CD8-positive, alpha-beta T cell (primary cell): ENCODE measurements at regions of chrX and their contacts with region 1.

Region 1: DNA sequence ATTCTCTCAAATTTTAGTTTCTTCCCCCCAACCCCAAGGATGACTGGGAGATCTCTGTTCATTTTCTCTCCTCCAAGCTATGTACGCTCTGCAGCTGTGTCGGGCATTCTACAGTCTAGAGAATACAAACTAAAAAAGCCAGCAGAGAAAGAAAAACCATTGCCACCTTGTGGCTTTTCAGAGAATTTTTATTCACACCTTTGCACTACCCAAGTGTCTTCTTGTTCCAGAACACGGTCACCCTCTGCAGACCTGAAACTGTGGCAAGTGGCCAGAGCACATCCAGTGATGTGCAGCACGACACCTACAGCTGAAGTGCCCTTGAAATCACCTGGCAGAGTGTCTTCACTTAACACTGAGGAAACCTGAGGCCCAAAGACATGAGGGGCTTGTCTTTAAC is 68.6 kb downstream of the CHST7 start:
- DNase-seq: peak in 3 of 9 experiments; percentile 0 to 49 (median 36)
- ATAC-seq: peak; percentile 54
- H3K4me3 ChIP-seq: no peak overlapping the region
- H3K4me3 Mint-ChIP-seq: no peak overlapping the region
- H3K27ac ChIP-seq: no peak overlapping the region
- H3K27ac Mint-ChIP-seq: no peak overlapping the region
- H3K4me1 ChIP-seq: no peaks in the 10 kb centered on the region
- H3K4me1 Mint-ChIP-seq: peaks cover 4% of the 10 kb centered on the region
- H3K27me3 ChIP-seq: no peaks in the 10 kb centered on the region
- H3K27me3 Mint-ChIP-seq: no peaks in the 10 kb centered on the region
- CTCF ChIP-seq: no peak

Region 2: GRCh38 chrX:46408553-46409407 is 233.4 kb before region 1 on chrX:
- CTCF ChIA-PET with region 1: no interaction called
- POLR2A ChIA-PET with region 1: no interaction called
- intact Hi-C with region 1: loop called in 1 of 2 experiments (anchors 10 kb)
- DNase-seq: peak; percentile 28 to 70 (median 64)
- ATAC-seq: no peak
- H3K4me3 ChIP-seq: no peak overlapping the region
- H3K4me3 Mint-ChIP-seq: no peak overlapping the region
- H3K27ac ChIP-seq: no peak overlapping the region
- H3K27ac Mint-ChIP-seq: no peak overlapping the region
- H3K4me1 ChIP-seq: no peaks in the 10 kb centered on the region
- H3K4me1 Mint-ChIP-seq: no peaks in the 10 kb centered on the region
- H3K27me3 ChIP-seq: no peaks in the 10 kb centered on the region
- H3K27me3 Mint-ChIP-seq: no peaks in the 10 kb centered on the region
- CTCF ChIP-seq: peak; percentile 60

Region 3: DNA sequence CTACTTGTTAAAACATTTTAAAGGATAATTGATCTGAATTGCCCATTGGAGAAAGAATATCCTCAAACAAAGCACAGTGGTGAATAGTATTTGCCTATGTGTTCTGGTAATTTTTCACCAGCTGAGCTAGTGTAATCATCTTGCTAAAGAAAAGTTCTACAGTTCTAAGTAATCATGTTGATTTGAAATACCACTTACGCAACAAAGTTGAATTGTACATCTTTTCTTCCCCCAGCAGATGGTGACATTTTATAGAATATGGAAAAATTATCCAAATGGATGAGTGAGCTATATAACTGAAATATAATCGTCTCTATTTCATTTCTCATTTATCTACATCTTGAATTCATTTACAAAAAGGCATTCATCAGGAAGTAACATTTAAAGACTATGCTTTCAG is 87.2 kb before region 1 on chrX:
- CTCF ChIA-PET with region 1: interaction called, 4 read pairs
- POLR2A ChIA-PET with region 1: no interaction called
- intact Hi-C with region 1: loop called in 1 of 2 experiments (anchors 5 kb)
- DNase-seq: peak in 1 of 9 experiments; percentile 28
- ATAC-seq: no peak
- H3K4me3 ChIP-seq: no peak overlapping the region
- H3K4me3 Mint-ChIP-seq: no peak overlapping the region
- H3K27ac ChIP-seq: no peak overlapping the region
- H3K27ac Mint-ChIP-seq: no peak overlapping the region
- H3K4me1 ChIP-seq: no peaks in the 10 kb centered on the region
- H3K4me1 Mint-ChIP-seq: no peaks in the 10 kb centered on the region
- H3K27me3 ChIP-seq: no peaks in the 10 kb centered on the region
- H3K27me3 Mint-ChIP-seq: no peaks in the 10 kb centered on the region
- CTCF ChIP-seq: no peak

Region 4: GRCh38 chrX:46573331-46573891 is 68.7 kb before region 1 on chrX and contains the start of gene CHST7:
- CTCF ChIA-PET with region 1: interaction called, 4 read pairs
- POLR2A ChIA-PET with region 1: no interaction called
- intact Hi-C with region 1: loop called (anchors 1 to 5 kb)
- DNase-seq: peak; percentile 15 to 77 (median 54)
- ATAC-seq: peak; percentile 57
- H3K4me3 ChIP-seq: peak within 1 kb of the TSS; percentile 63 to 64
- H3K4me3 Mint-ChIP-seq: peak within 1 kb of the TSS; percentile 79
- H3K27ac ChIP-seq: peak within 1 kb of the TSS; percentile 45 to 77
- H3K27ac Mint-ChIP-seq: peak within 1 kb of the TSS; percentile 87
- H3K4me1 ChIP-seq: peaks cover 27% of the 10 kb centered on the region
- H3K4me1 Mint-ChIP-seq: peaks cover 34% of the 10 kb centered on the region
- H3K27me3 ChIP-seq: no peaks in the 10 kb centered on the region
- H3K27me3 Mint-ChIP-seq: peaks cover 3% of the 10 kb centered on the region
- CTCF ChIP-seq: no peak
- total RNA-seq, gene CHST7: 9.4 to 9.7 TPM

Region 5: GRCh38 chrX:47366028-47366722 is 724.0 kb after region 1 on chrX:
- CTCF ChIA-PET with region 1: no interaction called
- POLR2A ChIA-PET with region 1: no interaction called
- intact Hi-C with region 1: no loop called
- DNase-seq: peak; percentile 47 to 92 (median 70)
- ATAC-seq: peak; percentile 80
- H3K4me3 ChIP-seq: peak overlapping the region; percentile 56 to 60
- H3K4me3 Mint-ChIP-seq: peak overlapping the region; percentile 95
- H3K27ac ChIP-seq: peak overlapping the region; percentile 50 to 80
- H3K27ac Mint-ChIP-seq: peak overlapping the region; percentile 96
- H3K4me1 ChIP-seq: peaks cover 14% of the 10 kb centered on the region
- H3K4me1 Mint-ChIP-seq: peaks cover 25% of the 10 kb centered on the region
- H3K27me3 ChIP-seq: no peaks in the 10 kb centered on the region
- H3K27me3 Mint-ChIP-seq: no peaks in the 10 kb centered on the region
- CTCF ChIP-seq: no peak

Region 6: DNA sequence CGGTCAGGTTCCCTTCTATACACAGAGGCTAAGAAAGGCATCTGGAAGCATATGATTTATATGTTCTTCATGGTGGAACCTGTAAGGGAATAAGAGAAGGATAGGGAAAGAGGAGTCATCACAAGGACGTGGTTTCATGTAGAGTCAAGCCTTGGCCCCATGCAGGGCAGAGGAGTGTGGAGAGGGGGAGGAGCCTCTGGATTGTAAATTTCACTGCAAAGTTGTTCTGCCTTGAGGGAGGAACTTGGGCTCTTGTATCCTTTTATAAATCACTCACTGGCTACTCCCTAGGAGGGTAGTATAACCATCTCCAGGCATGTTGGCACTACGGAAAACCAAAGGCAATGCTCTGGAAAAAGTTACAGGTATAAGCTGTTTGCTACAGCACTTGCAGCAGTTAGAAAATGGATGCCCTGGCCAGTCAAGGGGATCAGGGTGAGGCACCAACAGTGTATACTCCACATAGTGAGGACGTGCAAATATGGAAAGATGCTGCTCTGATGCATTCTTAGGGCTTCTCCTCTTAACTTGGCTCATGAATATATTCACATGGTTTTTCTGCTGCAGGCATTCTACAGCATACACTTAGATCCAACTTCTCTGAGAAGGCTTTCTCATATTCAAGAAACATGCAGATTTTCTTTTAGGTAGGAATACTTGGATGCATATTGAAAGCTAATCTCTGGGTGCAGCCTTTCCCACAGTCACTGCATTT is 1134.3 kb after region 1 on chrX:
- CTCF ChIA-PET with region 1: no interaction called
- POLR2A ChIA-PET with region 1: no interaction called
- intact Hi-C with region 1: no loop called
- DNase-seq: no peak
- ATAC-seq: no peak
- H3K4me3 ChIP-seq: no peak overlapping the region
- H3K4me3 Mint-ChIP-seq: no peak overlapping the region
- H3K27ac ChIP-seq: no peak overlapping the region
- H3K27ac Mint-ChIP-seq: no peak overlapping the region
- H3K4me1 ChIP-seq: no peaks in the 10 kb centered on the region
- H3K4me1 Mint-ChIP-seq: no peaks in the 10 kb centered on the region
- H3K27me3 ChIP-seq: no peaks in the 10 kb centered on the region
- H3K27me3 Mint-ChIP-seq: peaks cover 2% of the 10 kb centered on the region
- CTCF ChIP-seq: no peak